HCT116 (cell line): ENCODE measurements at regions of chr12 and their contacts with region 1.

Region 1: DNA sequence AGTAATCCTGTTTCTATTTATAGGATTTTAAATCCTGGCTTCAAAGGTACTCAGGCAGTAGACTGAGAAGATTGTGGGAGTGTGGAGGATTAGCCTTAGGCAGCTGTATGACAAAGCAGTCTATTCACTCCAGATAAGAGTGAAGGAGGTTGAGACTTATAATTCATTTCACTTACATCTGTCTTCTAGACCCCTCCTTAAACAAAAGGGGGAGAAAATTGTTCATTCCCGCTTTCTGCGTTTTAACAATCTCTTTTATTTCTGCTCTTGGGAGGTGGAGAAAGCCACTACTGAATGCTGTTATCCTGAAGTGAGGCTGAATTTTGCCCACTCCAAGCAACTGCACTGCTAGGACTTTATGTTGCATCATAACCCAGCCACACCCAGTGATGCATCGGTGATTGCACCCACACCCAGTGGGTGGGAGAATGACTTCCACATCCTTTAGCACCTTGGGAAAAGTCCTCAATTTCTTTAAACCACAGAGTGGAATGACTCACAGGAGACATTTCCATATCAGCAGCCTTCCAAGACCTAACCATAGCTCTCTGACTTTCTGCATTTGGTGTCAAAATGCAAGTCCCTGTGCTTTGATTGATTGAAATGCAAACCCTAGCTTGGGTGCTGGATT is 382.5 kb upstream of the ATP2B1 start:
- DNase-seq: peak; percentile 97
- ATAC-seq: peak; percentile 91
- H3K4me3 ChIP-seq: peak overlapping the region; percentile 16 to 27
- H3K27ac ChIP-seq: peak overlapping the region; percentile 18; the same call in 1 of the 2 replicates
- H3K4me1 ChIP-seq: peaks cover 12 to 17% of the 10 kb centered on the region in 2 experiments
- H3K27me3 ChIP-seq: no peaks in the 10 kb centered on the region
- CTCF ChIP-seq: no peak
- POLR2A ChIP-seq: no peak
- RAD21 ChIP-seq: peak; percentile 33

Region 2: GRCh38 chr12:89756585-89757321 is 334.4 kb before region 1 on chr12:
- CTCF ChIA-PET with region 1: no interaction called
- POLR2A ChIA-PET with region 1: no interaction called
- RAD21 ChIA-PET with region 1: no interaction called
- intact Hi-C with region 1: loop called (anchors 2 kb)
- DNase-seq: peak; percentile 89
- ATAC-seq: peak; percentile 83
- H3K4me3 ChIP-seq: no peak overlapping the region
- H3K27ac ChIP-seq: no peak overlapping the region
- H3K4me1 ChIP-seq: peaks cover 3 to 18% of the 10 kb centered on the region in 2 experiments; a peak in 2 of 4 replicates
- H3K27me3 ChIP-seq: no peaks in the 10 kb centered on the region
- CTCF ChIP-seq: no peak
- POLR2A ChIP-seq: no peak
- RAD21 ChIP-seq: 0 out of 2 replicates have a peak, but pooled peaks have one; percentile 16

Region 3: DNA sequence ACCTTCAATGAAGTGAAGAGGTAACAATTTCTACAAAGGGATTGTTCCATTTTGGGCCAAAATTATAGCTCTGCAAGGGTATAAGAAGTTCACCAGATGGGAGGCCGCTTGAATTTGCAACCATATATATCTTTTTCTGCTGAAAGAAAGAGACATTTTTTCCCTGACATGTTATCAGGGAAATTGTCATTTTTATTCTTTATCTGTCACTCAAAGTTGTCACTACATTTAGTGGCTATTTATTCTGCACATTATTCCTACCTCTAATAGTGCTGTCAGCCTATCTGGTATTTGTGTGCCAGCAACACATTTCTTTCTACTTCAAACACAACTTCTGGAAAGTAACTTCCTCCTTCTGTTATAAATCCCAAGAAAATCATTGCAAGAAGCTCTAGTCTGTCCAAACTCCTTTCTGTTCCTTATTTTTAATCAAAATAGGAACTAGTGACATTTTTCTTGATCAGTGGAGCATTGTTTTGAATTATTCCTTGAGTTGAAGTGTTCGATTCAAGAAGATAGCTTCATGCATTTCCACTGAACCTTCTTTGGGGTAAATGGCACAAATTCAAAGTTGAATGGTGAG is 244.6 kb before region 1 on chr12:
- CTCF ChIA-PET with region 1: no interaction called
- POLR2A ChIA-PET with region 1: no interaction called
- RAD21 ChIA-PET with region 1: no interaction called
- intact Hi-C with region 1: no loop called
- DNase-seq: no peak
- ATAC-seq: no peak
- H3K4me3 ChIP-seq: no peak overlapping the region
- H3K27ac ChIP-seq: no peak overlapping the region
- H3K4me1 ChIP-seq: no peaks in the 10 kb centered on the region
- H3K27me3 ChIP-seq: no peaks in the 10 kb centered on the region
- CTCF ChIP-seq: no peak
- POLR2A ChIP-seq: no peak
- RAD21 ChIP-seq: no peak